ENCODE measurements at regions of chr5 and their contacts with region 1.

Region 1: GRCh38 chr5:38601844-38602424 is 45.5 kb upstream of the LIFR start:
- DNase-seq: no peak
- ATAC-seq: peak in 1 of 8 donors; percentile 43
- H3K4me3 ChIP-seq: no peak overlapping the region
- H3K27ac ChIP-seq: peak overlapping the region; percentile 14 to 76 (median 52)
- H3K4me1 ChIP-seq: peaks cover 17 to 58% (median 42%) of the 10 kb centered on the region in 9 donors
- H3K27me3 ChIP-seq: no peaks in the 10 kb centered on the region
- CTCF ChIP-seq: no peak

Region 2: DNA sequence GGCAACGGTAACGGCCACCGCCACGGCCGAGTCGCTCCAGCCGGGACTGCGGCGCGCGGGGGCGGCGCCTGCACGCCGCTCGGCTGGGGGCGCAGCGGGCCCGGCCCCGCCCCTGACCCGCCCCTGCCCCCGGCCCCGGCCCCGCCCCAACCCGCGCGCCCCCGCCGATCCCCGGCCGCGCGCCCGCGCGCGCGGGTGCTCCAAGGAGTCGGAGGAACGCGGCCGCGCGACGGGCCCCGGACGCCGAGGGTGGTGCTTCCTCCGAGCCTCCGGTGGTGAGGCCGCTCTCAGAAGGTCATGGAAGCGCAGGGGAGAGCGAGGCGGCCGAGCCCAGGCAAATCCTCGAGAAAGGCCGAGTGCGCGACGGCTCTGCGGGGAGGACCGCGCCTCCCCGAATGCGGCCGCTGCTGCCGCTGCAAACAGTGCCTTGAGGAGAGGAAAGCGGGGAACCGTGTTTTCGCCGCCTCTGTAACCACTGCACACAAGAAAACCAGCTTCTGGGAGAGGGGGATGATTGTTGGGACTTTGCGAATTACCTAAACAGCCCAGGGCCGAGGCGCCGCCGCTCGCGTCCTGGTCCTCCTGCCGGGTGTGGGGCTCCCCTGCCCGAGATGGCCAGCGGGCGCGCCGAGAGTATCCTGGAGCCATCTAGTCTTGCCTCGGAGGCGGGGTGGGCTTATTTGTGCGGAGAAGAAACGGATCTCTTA is 45.2 kb before region 1 on chr5 and contains the start of gene LIFR:
- intact Hi-C with region 1: loop called in 2 of 10 experiments (anchors 2 kb)
- DNase-seq: peak; percentile 84 to 88
- ATAC-seq: peak; percentile 90 to 93 (median 92)
- H3K4me3 ChIP-seq: peak within 1 kb of the TSS; percentile 67 to 97 (median 83)
- H3K27ac ChIP-seq: peak within 1 kb of the TSS; percentile 93 to 100 (median 98)
- H3K4me1 ChIP-seq: peaks cover 0 to 64% (median 32%) of the 10 kb centered on the region in 9 donors
- H3K27me3 ChIP-seq: peaks cover 0 to 64% (median 0%) of the 10 kb centered on the region in 7 donors
- CTCF ChIP-seq: peak in 1 of 9 donors; percentile 4
- total RNA-seq, gene LIFR: 34.7 to 58.8 (median 46.0) TPM

Region 3: DNA sequence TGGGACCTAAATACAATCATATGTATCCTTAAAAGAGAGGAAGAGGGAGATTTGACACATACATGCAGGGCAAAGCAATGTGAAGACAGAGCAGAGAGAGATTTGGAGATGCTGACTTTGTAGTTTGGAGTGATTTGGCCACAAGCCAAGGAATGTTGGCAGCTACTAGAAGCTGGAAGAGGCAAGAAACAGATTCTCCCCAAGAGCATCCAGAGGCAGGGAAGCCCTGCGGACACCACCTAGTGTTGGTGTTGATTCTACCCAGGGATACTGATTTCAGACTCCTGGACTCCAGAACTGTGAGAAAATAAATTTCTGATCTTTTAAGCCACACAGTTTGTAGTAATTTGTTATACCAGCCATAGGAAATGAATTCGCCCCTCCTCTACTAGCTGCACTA is 179.0 kb after region 1 on chr5:
- intact Hi-C with region 1: loop called in 1 of 10 experiments (anchors 5 kb)
- DNase-seq: peak; percentile 37 to 81
- ATAC-seq: peak; percentile 41 to 74 (median 64)
- H3K4me3 ChIP-seq: no peak overlapping the region
- H3K27ac ChIP-seq: no peak overlapping the region
- H3K4me1 ChIP-seq: peaks cover 0 to 40% (median 33%) of the 10 kb centered on the region in 9 donors
- H3K27me3 ChIP-seq: peaks cover 0 to 4% (median 0%) of the 10 kb centered on the region in 7 donors
- CTCF ChIP-seq: peak in 8 of 9 donors; percentile 15 to 60 (median 48)

Measured in heart right ventricle (tissue), 16 donors.